HEK293 (cell line): ENCODE measurements at regions of chr5 and their contacts with region 1.

Region 1: DNA sequence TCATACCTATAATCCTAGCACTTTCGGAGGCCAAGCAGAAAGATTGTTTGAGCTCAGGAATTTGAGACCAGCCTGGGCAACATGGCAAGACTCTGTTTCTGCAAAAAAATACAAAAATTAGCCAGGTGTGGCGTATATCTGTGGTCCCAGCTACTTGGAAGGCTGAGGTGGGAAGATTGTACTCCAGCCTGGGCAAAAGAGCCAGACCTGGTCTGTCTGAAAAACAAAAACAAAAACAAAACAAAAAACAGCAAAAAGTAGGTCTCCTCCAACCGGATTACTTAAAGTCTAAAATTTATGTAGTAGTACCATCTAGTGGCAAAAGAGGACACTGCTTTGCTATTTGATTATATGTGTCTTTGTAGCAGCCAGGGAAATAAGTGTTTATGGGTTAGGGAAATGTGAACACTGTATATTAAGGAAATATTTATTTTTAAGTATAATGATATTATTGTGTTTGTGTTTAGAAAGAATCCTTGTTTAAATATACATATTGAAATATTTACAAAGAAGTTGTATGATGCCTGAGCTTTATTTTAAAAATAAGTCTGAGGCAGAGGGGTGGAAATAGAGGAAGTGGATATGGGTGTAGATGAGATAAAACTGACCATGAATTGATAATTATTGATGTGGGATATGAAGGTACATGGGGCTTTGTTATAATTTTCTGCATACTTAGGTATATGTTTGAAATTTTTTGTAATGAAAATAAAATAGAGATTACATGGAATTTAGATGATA is 20.0 kb downstream of the APC start:
- H3K4me3 ChIP-seq: no peak overlapping the region
- H3K27ac ChIP-seq: no peak overlapping the region
- H3K4me1 ChIP-seq: no peaks in the 10 kb centered on the region
- CTCF ChIP-seq: peak; percentile 66

Region 2: DNA sequence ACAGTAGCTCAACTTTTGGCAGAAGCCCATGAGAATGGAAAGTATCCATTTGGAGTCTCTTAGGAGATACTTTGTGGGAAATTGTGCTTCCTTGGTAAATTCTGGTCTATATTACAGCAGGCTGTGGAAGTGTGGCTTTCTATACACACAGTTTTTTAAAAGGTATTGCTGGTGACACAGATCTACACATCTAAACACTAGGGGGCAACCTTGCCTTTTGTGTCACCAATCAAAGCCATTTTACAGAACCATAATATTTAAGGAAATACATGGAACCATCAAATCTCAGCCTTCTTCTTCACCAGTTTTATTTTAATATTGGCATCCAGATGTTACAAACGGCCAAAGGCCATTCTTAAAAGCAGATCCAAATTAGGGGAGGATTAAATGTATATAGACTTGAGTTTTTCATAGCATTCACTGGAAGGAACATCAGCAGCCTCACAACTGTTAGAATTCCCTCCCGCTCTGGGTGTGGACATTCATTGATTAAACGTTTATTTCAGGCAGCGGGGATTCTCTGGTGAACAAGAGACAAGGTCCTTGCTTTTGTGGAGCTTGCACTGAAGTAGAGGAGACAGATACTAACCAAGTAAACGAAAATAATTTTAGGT is 206.1 kb before region 1 on chr5:
- CTCF ChIA-PET with region 1: interaction called, 138 read pairs
- POLR2A ChIA-PET with region 1: no interaction called
- H3K4me3 ChIP-seq: no peak overlapping the region
- H3K27ac ChIP-seq: no peak overlapping the region
- H3K4me1 ChIP-seq: no peaks in the 10 kb centered on the region
- CTCF ChIP-seq: no peak; the same call in 1 of the 2 replicates

Region 3: DNA sequence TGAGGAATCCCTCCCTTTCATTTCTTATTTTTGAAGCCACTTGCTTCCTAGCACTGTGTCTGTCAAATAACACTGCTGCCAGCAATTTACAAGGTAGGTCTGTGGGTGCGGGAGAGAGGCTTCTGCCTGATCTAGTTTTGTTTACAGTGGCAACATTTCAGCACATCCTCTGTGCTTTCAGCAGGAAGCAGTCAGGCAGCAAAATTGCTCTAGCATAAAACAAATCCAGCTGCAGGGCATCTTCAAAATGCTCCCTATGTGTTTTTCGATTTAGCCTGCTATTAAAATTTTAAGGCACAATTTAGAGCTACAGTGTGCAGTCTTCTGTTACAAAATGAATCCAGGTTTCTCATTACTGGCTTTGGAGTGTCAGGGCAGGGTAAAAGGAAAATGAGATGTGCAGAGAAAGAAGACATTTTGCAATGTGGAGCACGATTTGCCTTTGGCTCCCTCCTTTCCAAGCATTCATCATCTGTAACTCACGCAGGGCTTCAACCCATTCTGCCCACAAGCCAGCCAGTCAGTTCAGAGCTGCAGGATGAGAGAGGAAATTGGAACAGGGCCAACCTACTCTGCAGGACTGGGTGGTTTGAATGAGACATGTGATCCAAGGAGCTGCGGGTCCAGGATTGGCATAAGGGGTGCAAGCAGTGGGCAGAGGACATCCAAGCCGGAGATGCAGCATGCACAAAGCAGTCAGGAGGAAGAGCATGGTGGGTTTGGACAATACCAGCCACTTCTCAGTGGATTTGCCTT is 163.4 kb before region 1 on chr5:
- CTCF ChIA-PET with region 1: no interaction called
- POLR2A ChIA-PET with region 1: no interaction called
- H3K4me3 ChIP-seq: no peak overlapping the region
- H3K27ac ChIP-seq: no peak overlapping the region
- H3K4me1 ChIP-seq: peaks cover 5% of the 10 kb centered on the region; the same call in 1 of the 2 replicates
- CTCF ChIP-seq: no peak

Region 4: GRCh38 chr5:112691758-112692157 is 65.9 kb before region 1 on chr5:
- CTCF ChIA-PET with region 1: interaction called, 152 read pairs
- POLR2A ChIA-PET with region 1: no interaction called
- H3K4me3 ChIP-seq: no peak overlapping the region
- H3K27ac ChIP-seq: no peak overlapping the region
- H3K4me1 ChIP-seq: no peaks in the 10 kb centered on the region
- CTCF ChIP-seq: peak; percentile 47

Region 5: DNA sequence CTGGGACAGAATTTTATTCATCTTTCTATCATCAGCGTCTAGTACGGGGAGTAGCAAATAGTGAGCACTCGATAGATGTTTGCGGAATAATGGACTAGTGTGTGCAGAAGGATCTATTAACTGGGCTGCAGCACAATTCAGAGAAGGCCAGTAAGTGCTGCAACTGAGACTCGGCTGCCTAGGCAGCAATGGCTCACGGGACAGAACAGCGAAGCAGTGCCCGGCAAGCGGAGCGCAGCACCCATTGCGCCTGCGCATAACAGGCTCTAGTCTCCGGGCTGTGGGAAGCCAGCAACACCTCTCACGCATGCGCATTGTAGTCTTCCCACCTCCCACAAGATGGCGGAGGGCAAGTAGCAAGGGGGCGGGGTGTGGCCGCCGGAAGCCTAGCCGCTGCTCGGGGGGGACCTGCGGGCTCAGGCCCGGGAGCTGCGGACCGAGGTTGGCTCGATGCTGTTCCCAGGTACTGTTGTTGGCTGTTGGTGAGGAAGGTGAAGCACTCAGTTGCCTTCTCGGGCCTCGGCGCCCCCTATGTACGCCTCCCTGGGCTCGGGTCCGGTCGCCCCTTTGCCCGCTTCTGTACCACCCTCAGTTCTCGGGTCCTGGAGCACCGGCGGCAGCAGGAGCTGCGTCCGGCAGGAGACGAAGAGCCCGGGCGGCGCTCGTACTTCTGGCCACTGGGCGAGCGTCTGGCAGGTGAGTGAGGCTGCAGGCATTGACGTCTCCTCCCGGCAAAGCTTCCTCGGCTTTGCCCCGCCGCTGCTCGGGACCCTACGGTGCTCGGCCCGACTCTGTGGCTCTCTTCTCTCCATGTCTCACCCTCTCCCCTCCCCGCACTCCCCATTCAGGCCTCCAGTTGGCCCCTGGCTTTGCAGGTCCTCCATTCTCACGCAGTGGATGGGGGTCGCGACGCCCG is 50.2 kb before region 1 on chr5:
- CTCF ChIA-PET with region 1: interaction called, 19 read pairs
- POLR2A ChIA-PET with region 1: no interaction called
- H3K4me3 ChIP-seq: peak overlapping the region; percentile 74
- H3K27ac ChIP-seq: peak overlapping the region; percentile 85
- H3K4me1 ChIP-seq: peaks cover 4% of the 10 kb centered on the region
- CTCF ChIP-seq: peak; percentile 73

Region 6: DNA sequence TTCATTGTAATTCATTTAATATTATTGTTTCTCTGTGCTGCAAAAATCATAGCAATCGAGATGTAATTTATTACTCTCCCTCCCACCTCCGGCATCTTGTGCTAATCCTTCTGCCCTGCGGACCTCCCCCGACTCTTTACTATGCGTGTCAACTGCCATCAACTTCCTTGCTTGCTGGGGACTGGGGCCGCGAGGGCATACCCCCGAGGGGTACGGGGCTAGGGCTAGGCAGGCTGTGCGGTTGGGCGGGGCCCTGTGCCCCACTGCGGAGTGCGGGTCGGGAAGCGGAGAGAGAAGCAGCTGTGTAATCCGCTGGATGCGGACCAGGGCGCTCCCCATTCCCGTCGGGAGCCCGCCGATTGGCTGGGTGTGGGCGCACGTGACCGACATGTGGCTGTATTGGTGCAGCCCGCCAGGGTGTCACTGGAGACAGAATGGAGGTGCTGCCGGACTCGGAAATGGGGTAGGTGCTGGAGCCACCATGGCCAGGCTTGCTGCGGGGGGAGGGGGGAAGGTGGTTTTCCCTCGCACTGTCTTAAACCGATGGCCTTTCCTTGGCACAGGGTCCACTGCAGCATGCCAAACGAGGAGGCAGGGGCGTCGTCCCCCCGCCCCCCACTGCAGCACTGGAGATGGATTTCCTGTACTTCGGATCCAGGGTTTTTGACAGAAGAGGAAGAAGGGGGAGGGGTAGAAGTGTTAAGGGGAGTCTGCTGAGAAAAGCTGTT is 20.0 kb before region 1 on chr5 and contains the start of gene APC:
- CTCF ChIA-PET with region 1: interaction called, 16 read pairs
- POLR2A ChIA-PET with region 1: no interaction called
- H3K4me3 ChIP-seq: peak within 1 kb of the TSS; percentile 93
- H3K27ac ChIP-seq: peak within 1 kb of the TSS; percentile 34; the same call in 1 of the 2 replicates
- H3K4me1 ChIP-seq: peaks cover 6% of the 10 kb centered on the region
- CTCF ChIP-seq: peak; percentile 65

Region 7: GRCh38 chr5:112772124-112772523 is 14.5 kb after region 1 on chr5:
- CTCF ChIA-PET with region 1: interaction called, 10 read pairs
- POLR2A ChIA-PET with region 1: no interaction called
- H3K4me3 ChIP-seq: no peak overlapping the region
- H3K27ac ChIP-seq: no peak overlapping the region
- H3K4me1 ChIP-seq: no peaks in the 10 kb centered on the region
- CTCF ChIP-seq: no peak

Region 8: GRCh38 chr5:112938286-112938685 is 180.6 kb after region 1 on chr5:
- CTCF ChIA-PET with region 1: no interaction called
- POLR2A ChIA-PET with region 1: no interaction called
- H3K4me3 ChIP-seq: no peak overlapping the region
- H3K27ac ChIP-seq: no peak overlapping the region
- H3K4me1 ChIP-seq: no peaks in the 10 kb centered on the region
- CTCF ChIP-seq: no peak

Region 9: GRCh38 chr5:113713051-113713450 is 955.4 kb after region 1 on chr5:
- CTCF ChIA-PET with region 1: no interaction called
- POLR2A ChIA-PET with region 1: no interaction called
- H3K4me3 ChIP-seq: no peak overlapping the region
- H3K27ac ChIP-seq: no peak overlapping the region
- H3K4me1 ChIP-seq: no peaks in the 10 kb centered on the region
- CTCF ChIP-seq: no peak